ENCODE measurements at regions of chr2 and their contacts with region 1.

Region 1: GRCh38 chr2:222318026-222318711 is 19.4 kb upstream of the PAX3 start:
- DNase-seq: peak; percentile 4
- H3K4me3 ChIP-seq: peak overlapping the region; percentile 49
- H3K27ac ChIP-seq: no peak overlapping the region
- H3K27me3 ChIP-seq: peaks cover 33% of the 10 kb centered on the region
- CTCF ChIP-seq: peak; percentile 47

Region 2: GRCh38 chr2:221741496-221742211 is 576.5 kb before region 1 on chr2:
- CTCF ChIA-PET with region 1: no interaction called
- POLR2A ChIA-PET with region 1: no interaction called
- DNase-seq: no peak
- H3K4me3 ChIP-seq: no peak overlapping the region
- H3K27ac ChIP-seq: no peak overlapping the region
- H3K27me3 ChIP-seq: no peaks in the 10 kb centered on the region
- CTCF ChIP-seq: no peak

Region 3: GRCh38 chr2:221929259-221929658 is 388.9 kb before region 1 on chr2:
- CTCF ChIA-PET with region 1: no interaction called
- POLR2A ChIA-PET with region 1: no interaction called
- DNase-seq: no peak
- H3K4me3 ChIP-seq: no peak overlapping the region
- H3K27ac ChIP-seq: no peak overlapping the region
- H3K27me3 ChIP-seq: no peaks in the 10 kb centered on the region
- CTCF ChIP-seq: no peak

Region 4: GRCh38 chr2:222613715-222614331 is 295.7 kb after region 1 on chr2:
- CTCF ChIA-PET with region 1: interaction called, 38 read pairs
- POLR2A ChIA-PET with region 1: no interaction called
- DNase-seq: peak; percentile 10
- H3K4me3 ChIP-seq: no peak overlapping the region
- H3K27ac ChIP-seq: no peak overlapping the region
- H3K27me3 ChIP-seq: no peaks in the 10 kb centered on the region
- CTCF ChIP-seq: peak; percentile 92